ENCODE measurements at regions of chr4 and their contacts with region 1.

Region 1: DNA sequence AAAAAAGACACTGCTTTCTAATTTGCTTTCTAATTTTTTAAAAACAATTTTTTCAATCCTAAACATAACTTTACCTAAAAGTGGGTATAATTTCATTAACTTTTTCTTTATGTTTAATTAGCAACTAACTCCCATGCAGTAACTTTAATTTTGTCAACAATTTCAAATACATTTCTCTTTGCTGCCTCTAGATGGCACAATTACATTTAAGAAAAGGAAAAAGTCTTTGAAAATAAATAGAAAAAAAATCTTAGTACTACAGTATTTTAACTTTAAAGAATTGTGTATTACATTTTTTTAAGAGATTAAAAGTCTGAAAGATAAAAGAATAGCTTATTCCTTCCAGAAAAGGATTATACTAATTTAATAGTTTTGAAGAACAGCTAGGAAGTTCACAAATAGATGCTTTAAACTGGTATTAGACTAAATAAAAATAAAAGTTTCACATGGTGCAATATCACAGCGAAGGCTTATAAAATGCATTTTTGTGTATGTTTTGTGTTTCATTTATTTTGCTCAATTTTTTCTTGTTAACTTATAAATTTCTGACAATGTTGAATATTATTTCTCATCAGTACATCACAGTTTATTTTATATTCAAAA is 105.1 kb downstream of the ADGRA3 start:
- DNase-seq: no peak
- ATAC-seq: no peak
- H3K4me3 Mint-ChIP-seq: no peak overlapping the region
- H3K27ac Mint-ChIP-seq: no peak overlapping the region
- H3K4me1 Mint-ChIP-seq: no peaks in the 10 kb centered on the region
- H3K27me3 Mint-ChIP-seq: no peaks in the 10 kb centered on the region

Region 2: DNA sequence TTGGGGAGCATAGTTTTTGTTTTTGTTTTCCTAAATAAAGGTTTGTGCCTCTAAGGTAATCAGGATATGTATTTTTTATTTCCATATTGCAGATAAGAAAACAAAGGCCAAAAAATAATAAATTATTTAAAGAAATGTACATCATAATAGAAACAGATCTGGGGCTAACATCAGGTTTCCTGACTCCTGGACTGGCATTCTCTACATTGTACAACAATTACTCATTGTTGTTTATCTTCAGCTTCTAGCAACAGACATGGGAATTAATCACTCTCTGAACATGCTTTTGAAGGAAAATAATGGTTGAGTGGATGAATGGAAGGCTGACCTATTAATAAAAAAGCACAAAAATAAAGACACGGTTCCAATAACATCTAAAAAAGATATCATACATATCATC is 608.3 kb before region 1 on chr4:
- CTCF ChIA-PET with region 1: no interaction called
- POLR2A ChIA-PET with region 1: no interaction called
- intact Hi-C with region 1: no loop called
- DNase-seq: no peak
- ATAC-seq: no peak
- H3K4me3 Mint-ChIP-seq: no peak overlapping the region
- H3K27ac Mint-ChIP-seq: no peak overlapping the region
- H3K4me1 Mint-ChIP-seq: no peaks in the 10 kb centered on the region
- H3K27me3 Mint-ChIP-seq: no peaks in the 10 kb centered on the region

Region 3: GRCh38 chr4:22430626-22431025 is 19.9 kb after region 1 on chr4:
- CTCF ChIA-PET with region 1: interaction called, 10 read pairs
- POLR2A ChIA-PET with region 1: no interaction called
- intact Hi-C with region 1: no loop called
- DNase-seq: no peak
- ATAC-seq: no peak
- H3K4me3 Mint-ChIP-seq: no peak overlapping the region
- H3K27ac Mint-ChIP-seq: no peak overlapping the region
- H3K4me1 Mint-ChIP-seq: no peaks in the 10 kb centered on the region
- H3K27me3 Mint-ChIP-seq: no peaks in the 10 kb centered on the region

Region 4: DNA sequence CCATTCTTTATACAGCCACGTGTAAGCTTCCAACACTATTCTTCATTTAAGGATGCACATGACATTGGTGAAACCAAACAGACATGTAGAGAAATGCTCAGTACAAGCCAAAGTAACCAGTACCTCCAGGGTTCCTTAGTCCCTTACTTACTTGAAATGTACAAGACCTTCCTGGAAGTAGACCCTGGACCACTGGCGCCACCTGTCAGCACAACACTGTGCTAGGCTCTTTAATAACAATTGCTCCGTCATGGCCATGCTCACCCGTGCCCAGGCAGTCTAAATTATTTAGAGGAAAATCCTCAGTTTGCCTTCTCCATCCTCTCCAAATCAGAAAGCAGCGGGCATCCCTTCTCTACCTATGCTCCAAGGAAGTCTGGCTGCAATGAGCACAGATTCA is 52.4 kb after region 1 on chr4:
- CTCF ChIA-PET with region 1: interaction called, 6 read pairs
- POLR2A ChIA-PET with region 1: no interaction called
- intact Hi-C with region 1: loop called in 1 of 2 experiments (anchors 1 kb)
- DNase-seq: peak; percentile 64
- ATAC-seq: peak; percentile 49
- H3K4me3 Mint-ChIP-seq: no peak overlapping the region
- H3K27ac Mint-ChIP-seq: peak overlapping the region; percentile 32
- H3K4me1 Mint-ChIP-seq: peaks cover 11% of the 10 kb centered on the region
- H3K27me3 Mint-ChIP-seq: no peaks in the 10 kb centered on the region

Region 5: GRCh38 chr4:22607382-22607781 is 196.6 kb after region 1 on chr4:
- CTCF ChIA-PET with region 1: interaction called, 8 read pairs
- POLR2A ChIA-PET with region 1: no interaction called
- intact Hi-C with region 1: loop called (anchors 1 kb)
- DNase-seq: peak; percentile 73
- ATAC-seq: peak; percentile 99
- H3K4me3 Mint-ChIP-seq: no peak overlapping the region
- H3K27ac Mint-ChIP-seq: no peak overlapping the region
- H3K4me1 Mint-ChIP-seq: peaks cover 26% of the 10 kb centered on the region
- H3K27me3 Mint-ChIP-seq: no peaks in the 10 kb centered on the region